ENCODE measurements at regions of chr13 and their contacts with region 1.

Region 1: GRCh38 chr13:106619688-106620555 is 52.0 kb upstream of the ARGLU1 start:
- DNase-seq: peak; percentile 49
- ATAC-seq: peak; percentile 95
- H3K4me3 ChIP-seq: no peak overlapping the region
- H3K27ac ChIP-seq: no peak overlapping the region
- H3K4me1 ChIP-seq: no peaks in the 10 kb centered on the region
- H3K27me3 ChIP-seq: peaks cover 46% of the 10 kb centered on the region
- CTCF ChIP-seq: peak; percentile 70

Region 2: GRCh38 chr13:106567474-106568298 is 52.2 kb before region 1 on chr13 and contains the start of gene ARGLU1:
- CTCF ChIA-PET with region 1: no interaction called
- POLR2A ChIA-PET with region 1: no interaction called
- intact Hi-C with region 1: loop called (anchors 2 kb)
- DNase-seq: peak; percentile 89
- ATAC-seq: peak; percentile 71
- H3K4me3 ChIP-seq: peak within 1 kb of the TSS; percentile 80
- H3K27ac ChIP-seq: peak within 1 kb of the TSS; percentile 50
- H3K4me1 ChIP-seq: peaks cover 20% of the 10 kb centered on the region
- H3K27me3 ChIP-seq: no peaks in the 10 kb centered on the region
- CTCF ChIP-seq: no peak
- total RNA-seq, gene ARGLU1: 31.8 and 44.3 TPM in 2 replicates

Region 3: DNA sequence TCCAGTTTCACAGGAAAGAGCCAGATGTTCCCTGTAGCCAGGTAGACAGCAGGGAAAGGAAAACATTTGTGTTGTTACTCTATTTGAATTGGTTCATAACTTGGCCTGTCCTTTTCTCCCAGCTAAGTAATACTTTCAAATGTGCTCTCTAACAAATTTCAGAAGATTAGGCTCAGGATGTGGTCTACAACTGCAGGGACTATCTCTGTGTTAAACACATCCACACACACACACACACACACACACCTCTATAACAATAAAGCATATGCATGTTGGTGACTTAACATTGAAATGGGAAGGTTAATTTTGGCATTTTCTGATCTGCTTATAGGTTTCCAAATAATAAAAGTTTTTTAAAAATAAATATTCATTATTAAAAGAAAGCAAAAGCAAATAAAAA is 264.1 kb after region 1 on chr13:
- CTCF ChIA-PET with region 1: no interaction called
- POLR2A ChIA-PET with region 1: no interaction called
- intact Hi-C with region 1: no loop called
- DNase-seq: no peak
- ATAC-seq: no peak
- H3K4me3 ChIP-seq: no peak overlapping the region
- H3K27ac ChIP-seq: no peak overlapping the region
- H3K4me1 ChIP-seq: no peaks in the 10 kb centered on the region
- H3K27me3 ChIP-seq: peaks cover 15% of the 10 kb centered on the region; the same call in 1 of the 2 replicates
- CTCF ChIP-seq: no peak

Region 4: DNA sequence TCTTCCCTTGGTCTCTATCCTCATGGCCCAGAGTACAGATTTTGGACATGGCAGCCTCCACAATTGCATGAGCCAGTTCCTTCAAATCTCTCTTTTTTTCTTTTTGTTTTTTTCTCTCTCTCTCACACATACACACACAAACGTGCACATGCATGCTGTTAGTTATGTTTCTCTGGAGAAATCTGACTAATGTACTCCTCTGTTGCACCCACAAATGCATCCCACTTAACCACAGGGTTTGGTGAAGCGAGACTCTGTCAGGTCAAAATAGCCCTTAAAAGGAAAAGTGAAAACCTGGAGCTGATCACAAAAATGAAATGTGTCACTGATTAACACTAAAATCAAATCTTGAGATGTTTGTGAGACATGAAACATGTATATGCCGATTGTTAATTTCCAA is 322.6 kb after region 1 on chr13:
- CTCF ChIA-PET with region 1: no interaction called
- POLR2A ChIA-PET with region 1: no interaction called
- intact Hi-C with region 1: no loop called
- DNase-seq: no peak
- ATAC-seq: no peak
- H3K4me3 ChIP-seq: no peak overlapping the region
- H3K27ac ChIP-seq: no peak overlapping the region
- H3K4me1 ChIP-seq: no peaks in the 10 kb centered on the region
- H3K27me3 ChIP-seq: peaks cover 30% of the 10 kb centered on the region
- CTCF ChIP-seq: no peak

Measured in PC-3 (cell line).